ENCODE measurements at regions of chr6 and their contacts with region 1.

Region 1: DNA sequence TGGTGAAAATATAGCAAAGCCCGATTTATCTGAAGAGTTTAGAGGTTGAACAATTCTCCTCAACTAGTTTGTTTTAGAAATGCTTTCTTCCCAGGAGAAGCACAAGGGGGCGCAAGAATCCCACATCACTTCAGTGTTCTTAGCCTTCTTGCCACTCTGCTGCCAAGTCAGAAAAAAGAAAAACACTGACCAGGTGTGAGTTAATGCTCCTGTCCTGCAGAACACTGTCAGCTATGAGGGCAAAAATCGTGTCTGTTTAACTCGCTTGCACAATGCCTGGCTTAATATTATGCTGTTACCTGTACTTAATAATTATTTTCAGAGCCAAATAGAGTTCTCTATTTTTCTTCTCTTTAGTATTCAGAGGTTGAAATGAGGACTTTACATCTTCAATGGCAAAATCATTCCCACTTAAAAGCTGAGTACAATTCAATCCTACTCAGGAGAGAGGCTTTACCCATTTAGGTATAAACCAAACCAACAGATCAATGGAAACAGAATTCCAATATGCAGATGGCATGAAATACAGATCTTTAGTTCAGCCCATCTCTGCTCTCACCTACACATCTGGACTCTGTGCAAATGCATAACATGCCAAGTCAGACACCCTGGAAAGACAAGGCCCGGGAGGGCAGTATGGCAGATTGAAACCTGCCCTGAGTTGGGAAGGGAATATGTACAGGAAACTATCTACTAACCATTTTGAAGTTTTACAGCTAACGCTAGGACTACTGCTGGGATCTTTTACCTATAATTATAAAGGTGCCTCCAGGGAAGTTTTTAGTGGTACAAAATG is 71.4 kb upstream of the TULP1 start:
- DNase-seq: peak; percentile 54
- H3K4me3 Mint-ChIP-seq: no peak overlapping the region
- H3K27ac Mint-ChIP-seq: no peak overlapping the region
- H3K4me1 Mint-ChIP-seq: peaks cover 44% of the 10 kb centered on the region
- H3K27me3 Mint-ChIP-seq: no peaks in the 10 kb centered on the region

Region 2: GRCh38 chr6:35601331-35602132 is 17.4 kb after region 1 on chr6:
- intact Hi-C with region 1: loop called (anchors 1 kb)
- DNase-seq: peak; percentile 57
- H3K4me3 Mint-ChIP-seq: peak overlapping the region; percentile 80
- H3K27ac Mint-ChIP-seq: peak overlapping the region; percentile 89
- H3K4me1 Mint-ChIP-seq: peaks cover 62% of the 10 kb centered on the region
- H3K27me3 Mint-ChIP-seq: no peaks in the 10 kb centered on the region

Region 3: GRCh38 chr6:35624341-35625070 is 40.4 kb after region 1 on chr6:
- intact Hi-C with region 1: loop called (anchors 1 kb)
- DNase-seq: no peak
- H3K4me3 Mint-ChIP-seq: no peak overlapping the region
- H3K27ac Mint-ChIP-seq: peak overlapping the region; percentile 27
- H3K4me1 Mint-ChIP-seq: peaks cover 19% of the 10 kb centered on the region
- H3K27me3 Mint-ChIP-seq: no peaks in the 10 kb centered on the region

Region 4: GRCh38 chr6:35737413-35738211 is 153.5 kb after region 1 on chr6:
- intact Hi-C with region 1: loop called (anchors 1 kb)
- DNase-seq: no peak
- H3K4me3 Mint-ChIP-seq: no peak overlapping the region
- H3K27ac Mint-ChIP-seq: peak overlapping the region; percentile 66
- H3K4me1 Mint-ChIP-seq: peaks cover 32% of the 10 kb centered on the region
- H3K27me3 Mint-ChIP-seq: no peaks in the 10 kb centered on the region